Natural killer cell (primary cell): ENCODE measurements at regions of chr16 and their contacts with region 1.

Region 1: DNA sequence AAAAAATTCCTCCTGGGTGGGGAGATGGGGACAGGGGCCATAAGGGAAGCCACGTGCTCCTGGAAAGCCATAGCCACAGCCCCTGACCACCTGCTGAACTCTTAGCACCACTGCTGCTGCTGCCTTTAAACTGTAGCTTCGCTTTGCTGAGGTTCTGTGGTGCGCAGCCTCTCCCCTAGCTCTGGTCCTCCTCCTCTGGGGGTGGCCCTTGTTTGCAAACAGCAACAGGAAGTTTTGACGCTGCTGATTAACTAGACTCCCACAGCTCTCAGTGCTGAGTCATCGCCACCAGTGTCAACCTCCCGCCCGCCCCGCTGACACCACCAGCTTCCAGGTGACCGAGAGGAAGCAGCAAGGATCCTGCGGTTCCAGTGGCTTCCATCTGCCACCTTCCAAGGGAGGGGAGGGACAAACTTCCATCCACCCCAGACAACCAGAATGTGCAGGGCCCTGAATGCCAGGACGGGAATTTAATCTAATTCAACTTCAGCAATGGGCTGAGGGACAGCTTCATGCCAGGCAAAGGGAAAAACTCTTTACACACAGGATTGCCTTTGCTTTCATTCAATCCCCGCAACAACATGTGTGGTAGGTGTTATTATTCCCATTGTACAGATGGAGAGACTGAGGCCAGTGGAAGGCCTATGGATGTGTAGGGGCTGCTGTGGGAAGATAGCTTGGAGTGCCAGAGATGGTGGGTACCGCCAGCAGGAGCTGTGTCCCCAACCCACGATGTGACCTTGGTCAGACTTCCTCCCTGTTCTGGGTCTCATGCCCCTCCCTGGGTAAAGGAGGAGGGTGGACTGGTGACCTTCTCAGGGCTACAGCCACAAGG is 8.1 kb upstream of the KIFC3 start:
- DNase-seq: peak; percentile 82 to 89
- ATAC-seq: peak; percentile 93 to 99 (median 98)
- H3K4me3 ChIP-seq: no peak overlapping the region
- H3K4me3 Mint-ChIP-seq: peak overlapping the region; percentile 69
- H3K27ac ChIP-seq: peak overlapping the region; percentile 52
- H3K27ac Mint-ChIP-seq: peak overlapping the region; percentile 95 to 96
- H3K4me1 ChIP-seq: peaks cover 46% of the 10 kb centered on the region
- H3K4me1 Mint-ChIP-seq: peaks cover 49 to 50% of the 10 kb centered on the region in 2 donors
- H3K27me3 ChIP-seq: no peaks in the 10 kb centered on the region
- H3K27me3 Mint-ChIP-seq: no peaks in the 10 kb centered on the region
- CTCF ChIP-seq: no peak

Region 2: DNA sequence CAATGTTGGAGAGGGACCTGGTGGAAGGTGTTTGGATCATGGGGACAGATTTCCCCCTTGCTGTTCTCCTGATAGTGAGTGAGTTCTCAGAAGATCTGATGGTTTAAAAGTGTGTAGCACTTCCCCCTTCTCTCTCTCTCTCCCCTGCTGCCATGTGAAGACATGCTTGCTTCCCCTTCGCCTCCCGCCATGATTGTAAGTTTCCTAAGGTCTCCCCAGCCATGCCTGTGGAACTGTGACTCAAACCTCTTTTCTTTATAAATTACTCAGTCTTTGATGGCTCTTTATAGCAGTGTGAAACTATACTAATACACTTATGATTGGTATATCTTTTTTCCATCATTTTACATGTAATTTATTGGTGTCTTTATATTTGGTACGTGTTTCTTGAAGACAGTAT is 254.6 kb before region 1 on chr16:
- intact Hi-C with region 1: no loop called
- DNase-seq: no peak
- ATAC-seq: no peak
- H3K4me3 ChIP-seq: no peak overlapping the region
- H3K4me3 Mint-ChIP-seq: peak overlapping the region; percentile 76
- H3K27ac ChIP-seq: no peak overlapping the region
- H3K27ac Mint-ChIP-seq: peak overlapping the region; percentile 64 to 92
- H3K4me1 ChIP-seq: peaks cover 32% of the 10 kb centered on the region
- H3K4me1 Mint-ChIP-seq: peaks cover 76 to 90% of the 10 kb centered on the region in 2 donors
- H3K27me3 ChIP-seq: no peaks in the 10 kb centered on the region
- H3K27me3 Mint-ChIP-seq: no peaks in the 10 kb centered on the region
- CTCF ChIP-seq: no peak

Region 3: DNA sequence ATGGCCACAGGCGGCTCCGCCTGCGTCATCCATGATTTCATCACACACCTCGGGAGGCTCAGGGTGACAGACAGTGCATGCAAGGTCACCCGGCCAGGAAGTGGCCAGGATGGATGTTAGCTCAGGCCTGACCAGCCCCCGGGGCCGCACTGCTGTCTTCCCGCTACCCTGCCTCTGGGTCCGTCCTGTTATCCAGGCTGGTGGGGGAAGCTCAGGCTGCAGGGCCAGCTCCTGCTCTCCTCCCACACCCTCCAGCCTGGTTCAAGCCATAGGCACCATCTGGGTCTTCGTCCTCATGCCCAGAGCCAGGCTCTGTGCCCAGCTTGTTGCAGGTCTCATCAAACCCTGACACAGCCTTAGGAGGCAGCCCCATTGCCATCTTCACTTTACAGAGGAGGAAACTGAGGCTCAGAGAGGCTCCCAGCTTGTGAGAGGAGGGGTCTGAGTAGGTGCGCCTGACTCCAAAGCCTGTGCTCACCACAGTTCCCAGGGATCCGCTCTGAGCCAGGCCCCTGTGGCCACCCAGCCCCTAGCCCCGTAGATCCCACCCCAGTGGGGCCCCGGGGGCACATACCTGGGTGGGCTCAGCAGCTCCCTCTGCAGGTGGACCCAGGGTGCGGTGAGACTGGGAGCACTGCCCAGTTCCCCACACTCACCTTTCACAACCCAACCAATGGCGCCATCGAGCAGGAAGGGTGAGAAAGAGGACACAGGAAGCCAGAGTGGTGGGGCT is 142.7 kb before region 1 on chr16:
- intact Hi-C with region 1: loop called (anchors 5 kb)
- DNase-seq: peak; percentile 52 to 77
- ATAC-seq: peak; percentile 76 to 92 (median 82)
- H3K4me3 ChIP-seq: no peak overlapping the region
- H3K4me3 Mint-ChIP-seq: peak overlapping the region; percentile 53
- H3K27ac ChIP-seq: peak overlapping the region; percentile 90
- H3K27ac Mint-ChIP-seq: peak overlapping the region; percentile 97 to 98
- H3K4me1 ChIP-seq: peaks cover 53% of the 10 kb centered on the region
- H3K4me1 Mint-ChIP-seq: peaks cover 38 to 54% of the 10 kb centered on the region in 2 donors
- H3K27me3 ChIP-seq: no peaks in the 10 kb centered on the region
- H3K27me3 Mint-ChIP-seq: no peaks in the 10 kb centered on the region
- CTCF ChIP-seq: no peak

Region 4: GRCh38 chr16:57916735-57917451 is 106.5 kb after region 1 on chr16:
- intact Hi-C with region 1: no loop called
- DNase-seq: no peak
- ATAC-seq: no peak
- H3K4me3 ChIP-seq: no peak overlapping the region
- H3K4me3 Mint-ChIP-seq: no peak overlapping the region
- H3K27ac ChIP-seq: no peak overlapping the region
- H3K27ac Mint-ChIP-seq: no peak overlapping the region
- H3K4me1 ChIP-seq: no peaks in the 10 kb centered on the region
- H3K4me1 Mint-ChIP-seq: no peaks in the 10 kb centered on the region
- H3K27me3 ChIP-seq: no peaks in the 10 kb centered on the region
- H3K27me3 Mint-ChIP-seq: peaks cover 0 to 6% of the 10 kb centered on the region in 2 donors
- CTCF ChIP-seq: no peak